ENCODE measurements at regions of chr6 and their contacts with region 1.

Region 1: GRCh38 chr6:136146130-136146529 is 104.0 kb downstream of the MTFR2 start:
- DNase-seq: no peak
- H3K4me3 ChIP-seq: no peak overlapping the region
- H3K27ac ChIP-seq: no peak overlapping the region
- H3K4me1 ChIP-seq: no peaks in the 10 kb centered on the region
- H3K27me3 ChIP-seq: no peaks in the 10 kb centered on the region
- CTCF ChIP-seq: no peak

Region 2: GRCh38 chr6:136201732-136202131 is 55.6 kb after region 1 on chr6:
- CTCF ChIA-PET with region 1: no interaction called
- dilution Hi-C with region 1: loop called (anchors 5 kb)
- in situ Hi-C with region 1: no loop called
- intact Hi-C with region 1: no loop called
- DNase-seq: no peak
- H3K4me3 ChIP-seq: no peak overlapping the region
- H3K27ac ChIP-seq: no peak overlapping the region
- H3K4me1 ChIP-seq: no peaks in the 10 kb centered on the region
- H3K27me3 ChIP-seq: no peaks in the 10 kb centered on the region
- CTCF ChIP-seq: no peak